Transverse colon (tissue), 4 donors: ENCODE measurements at regions of chr6 and their contacts with region 1.

Region 1: GRCh38 chr6:125779924-125780539 is 10.7 kb upstream of the NCOA7 start:
- DNase-seq: peak; percentile 85
- H3K4me3 ChIP-seq: peak overlapping the region; percentile 27 to 71 (median 50)
- H3K27ac ChIP-seq: peak overlapping the region; percentile 92 to 96 (median 94)
- H3K4me1 ChIP-seq: peaks cover 0 to 9% (median 6%) of the 10 kb centered on the region in 4 donors
- H3K27me3 ChIP-seq: no peaks in the 10 kb centered on the region
- CTCF ChIP-seq: peak; percentile 39 to 81 (median 44)
- EP300 ChIP-seq: no peak
- POLR2A ChIP-seq: no peak

Region 2: GRCh38 chr6:125956506-125957390 is 176.7 kb after region 1 on chr6 and contains the start of gene HINT3:
- in situ Hi-C with region 1: loop called in 3 of 4 experiments (anchors 10 to 25 kb)
- intact Hi-C with region 1: loop called (anchors 10 kb)
- DNase-seq: peak; percentile 99
- H3K4me3 ChIP-seq: peak within 1 kb of the TSS; percentile 66 to 85 (median 84)
- H3K27ac ChIP-seq: peak within 1 kb of the TSS; percentile 90 to 95 (median 92)
- H3K4me1 ChIP-seq: peaks cover 8 to 27% (median 11%) of the 10 kb centered on the region in 4 donors
- H3K27me3 ChIP-seq: no peaks in the 10 kb centered on the region
- CTCF ChIP-seq: peak; percentile 96 to 100 (median 98)
- EP300 ChIP-seq: no peak
- POLR2A ChIP-seq: peak; percentile 57
- total RNA-seq, gene HINT3: 23.5 to 35.2 (median 30.7) TPM

Region 3: DNA sequence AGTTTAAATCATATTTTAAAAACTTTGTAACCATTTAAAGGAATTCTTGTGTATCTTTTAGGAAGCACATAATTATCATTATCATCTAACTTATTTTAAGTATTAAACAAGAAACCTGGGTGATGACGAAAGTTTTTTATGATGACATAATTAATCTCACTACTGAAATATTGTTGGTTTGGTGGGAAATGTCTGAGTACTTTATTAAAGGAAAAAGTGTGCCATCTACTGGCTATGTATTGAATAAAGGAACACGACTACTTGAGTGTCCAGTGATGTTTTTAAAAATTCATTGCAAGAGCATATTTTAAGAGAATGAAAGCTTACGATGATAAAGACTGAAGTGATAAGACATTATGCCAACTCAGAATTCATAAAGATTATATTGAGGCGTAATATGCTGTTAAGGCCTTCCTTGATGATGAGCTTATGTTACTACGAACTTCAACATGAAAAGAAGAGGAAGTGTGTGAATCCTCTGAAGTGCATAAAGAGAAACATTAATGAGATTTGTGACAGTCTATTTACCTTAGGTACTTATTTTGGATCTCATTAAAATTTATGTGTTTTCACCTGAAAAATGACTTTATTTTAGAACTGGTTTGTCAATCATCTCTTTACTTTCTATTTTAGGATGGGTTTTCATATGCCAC is 194.3 kb after region 1 on chr6:
- in situ Hi-C with region 1: loop called in 2 of 4 experiments (anchors 10 to 25 kb)
- intact Hi-C with region 1: no loop called
- DNase-seq: no peak
- H3K4me3 ChIP-seq: no peak overlapping the region
- H3K27ac ChIP-seq: no peak overlapping the region
- H3K4me1 ChIP-seq: no peaks in the 10 kb centered on the region
- H3K27me3 ChIP-seq: no peaks in the 10 kb centered on the region
- CTCF ChIP-seq: peak; percentile 45 to 54 (median 49)
- EP300 ChIP-seq: no peak
- POLR2A ChIP-seq: no peak

Region 4: DNA sequence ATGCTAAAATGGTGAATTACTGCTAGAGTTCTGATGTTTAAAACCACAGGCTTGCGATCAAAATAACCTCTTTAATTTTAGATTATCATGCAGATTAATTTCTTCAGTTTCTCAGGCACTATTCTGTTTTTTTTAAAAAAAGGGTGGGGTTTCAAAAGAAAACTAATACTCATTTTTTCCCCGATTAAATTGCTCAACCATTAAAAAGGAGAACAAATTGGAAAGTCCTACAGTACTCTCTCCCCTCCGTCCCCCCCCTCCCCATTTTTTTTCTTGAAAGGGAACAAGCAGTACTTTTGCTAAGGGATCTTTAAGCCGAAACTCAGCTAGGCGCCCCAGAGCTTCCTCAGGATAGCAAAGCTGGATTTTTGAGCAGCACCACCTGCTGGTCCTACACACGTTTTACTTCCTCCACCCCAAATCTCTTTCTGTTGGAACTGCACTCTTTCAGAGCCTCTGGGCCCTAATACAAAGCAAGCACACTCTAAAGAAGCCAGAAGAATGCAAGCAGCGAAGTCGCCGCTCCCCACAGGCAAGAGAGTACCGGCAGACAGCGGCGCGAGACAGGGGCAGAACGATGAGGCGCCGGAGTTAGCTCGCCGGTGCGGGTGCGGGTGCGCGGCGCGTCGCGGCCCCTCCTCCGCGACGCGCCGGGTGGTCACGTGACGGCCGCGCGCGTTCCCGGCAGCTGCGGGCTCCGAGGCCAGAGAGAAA is 1486.3 kb after region 1 on chr6 and contains the start of gene RNF146:
- in situ Hi-C with region 1: no loop called
- intact Hi-C with region 1: loop called (anchors 10 kb)
- DNase-seq: peak; percentile 85
- H3K4me3 ChIP-seq: peak within 1 kb of the TSS; percentile 74 to 94 (median 86)
- H3K27ac ChIP-seq: peak within 1 kb of the TSS; percentile 95 to 97 (median 96)
- H3K4me1 ChIP-seq: peaks cover 5 to 34% (median 19%) of the 10 kb centered on the region in 4 donors
- H3K27me3 ChIP-seq: no peaks in the 10 kb centered on the region
- CTCF ChIP-seq: peak; percentile 70 to 84 (median 74)
- EP300 ChIP-seq: no peak
- POLR2A ChIP-seq: no peak
- total RNA-seq, gene RNF146: 10.3 to 58.1 (median 29.0) TPM